Right ventricle myocardium inferior (tissue), 1 donor: ENCODE measurements at regions of chr2 and their contacts with region 1.

Region 1: DNA sequence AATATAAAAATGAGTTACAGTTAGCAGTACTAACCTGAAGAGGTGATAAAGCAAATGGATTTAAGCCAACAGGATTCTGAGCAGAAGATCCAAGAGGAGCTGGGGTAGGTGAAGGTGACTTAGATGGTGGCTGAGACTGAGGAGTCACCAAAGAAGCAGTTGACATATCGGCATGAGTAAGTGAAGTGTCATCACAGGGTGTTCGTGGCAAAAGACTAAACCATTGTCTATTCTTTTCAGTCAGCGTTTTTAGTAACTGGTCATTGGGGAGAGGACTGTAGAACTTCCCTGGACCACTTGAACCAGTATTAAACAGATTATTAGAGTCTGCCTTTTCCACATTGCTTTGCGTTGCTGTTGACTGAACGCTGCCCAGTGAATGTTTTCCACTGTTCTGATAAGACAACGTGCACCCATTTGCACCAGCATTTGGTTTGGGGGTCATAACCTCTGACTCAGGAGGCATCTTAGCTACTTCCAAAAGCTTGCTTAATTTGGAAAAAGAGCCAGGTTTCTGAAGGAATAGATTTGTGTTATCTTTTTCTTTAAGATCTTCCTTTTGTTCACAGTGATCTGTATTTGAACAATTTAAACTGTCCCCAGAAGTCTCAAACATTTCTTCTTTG is 63.3 kb upstream of the WDSUB1 start:
- DNase-seq: no peak
- ATAC-seq: no peak

Region 2: GRCh38 chr2:159201360-159202063 is 148.3 kb before region 1 on chr2:
- intact Hi-C with region 1: no loop called
- DNase-seq: no peak
- ATAC-seq: no peak

Region 3: GRCh38 chr2:159371506-159371905 is 21.7 kb after region 1 on chr2:
- intact Hi-C with region 1: loop called (anchors 1 kb)
- DNase-seq: no peak
- ATAC-seq: no peak

Region 4: DNA sequence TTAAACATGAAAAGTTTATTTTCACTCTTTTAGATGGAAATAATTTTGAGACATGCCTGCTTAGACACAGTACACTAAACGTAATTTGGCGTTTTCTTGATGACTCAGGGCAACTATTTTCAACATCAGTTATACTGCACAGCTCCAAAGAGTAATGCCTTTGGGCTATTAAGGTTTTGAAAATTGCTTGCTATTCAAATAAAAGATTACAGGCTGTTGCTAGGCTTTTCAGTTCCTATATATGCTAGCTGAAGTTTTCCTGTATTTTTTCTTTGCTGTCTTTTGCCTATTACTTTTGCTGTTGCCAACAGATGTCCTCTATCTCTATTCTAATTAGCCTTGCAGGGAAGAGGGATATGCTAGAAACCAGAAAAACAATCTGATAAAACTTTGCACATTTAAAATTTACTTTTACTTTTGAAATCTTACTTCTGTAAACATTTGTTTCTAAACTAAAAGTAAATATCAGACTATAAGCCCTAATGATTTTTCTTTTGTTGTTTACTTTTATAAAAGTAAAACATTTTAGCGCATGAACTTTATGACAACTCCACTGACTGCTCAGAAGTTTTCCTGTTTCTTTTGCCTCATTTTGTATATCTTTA is 50.1 kb after region 1 on chr2:
- intact Hi-C with region 1: no loop called
- DNase-seq: no peak
- ATAC-seq: no peak